Activated CD4-positive, alpha-beta memory T cell treated with anti-CD3 and anti-CD28 coated beads, Interleukin-2, amount 10 ng/mL, durations not matched to agents 7 days and 5 days (primary cell): ENCODE measurements at regions of chrX and their contacts with region 1.

Region 1: GRCh38 chrX:136780763-136781162 is at the start of gene ARHGEF6:
- DNase-seq: peak; percentile 60
- H3K4me3 Mint-ChIP-seq: peak within 1 kb of the TSS; percentile 82
- H3K27ac Mint-ChIP-seq: peak within 1 kb of the TSS; percentile 95
- H3K4me1 Mint-ChIP-seq: peaks cover 55% of the 10 kb centered on the region
- H3K27me3 Mint-ChIP-seq: no peaks in the 10 kb centered on the region
- total RNA-seq, gene ARHGEF6: 119 to 121 TPM

Region 2: GRCh38 chrX:136747003-136747986 is 33.5 kb before region 1 on chrX:
- CTCF ChIA-PET with region 1: no interaction called
- POLR2A ChIA-PET with region 1: interaction called, 14 read pairs
- DNase-seq: peak; percentile 26
- H3K4me3 Mint-ChIP-seq: no peak overlapping the region
- H3K27ac Mint-ChIP-seq: peak overlapping the region; percentile 70
- H3K4me1 Mint-ChIP-seq: peaks cover 86% of the 10 kb centered on the region
- H3K27me3 Mint-ChIP-seq: no peaks in the 10 kb centered on the region

Region 3: GRCh38 chrX:136767104-136767941 is 13.4 kb before region 1 on chrX:
- CTCF ChIA-PET with region 1: interaction called, 3 read pairs
- POLR2A ChIA-PET with region 1: interaction called, 78 read pairs
- DNase-seq: peak; percentile 62
- H3K4me3 Mint-ChIP-seq: peak overlapping the region; percentile 72
- H3K27ac Mint-ChIP-seq: peak overlapping the region; percentile 88
- H3K4me1 Mint-ChIP-seq: peaks cover 66% of the 10 kb centered on the region
- H3K27me3 Mint-ChIP-seq: no peaks in the 10 kb centered on the region

Region 4: DNA sequence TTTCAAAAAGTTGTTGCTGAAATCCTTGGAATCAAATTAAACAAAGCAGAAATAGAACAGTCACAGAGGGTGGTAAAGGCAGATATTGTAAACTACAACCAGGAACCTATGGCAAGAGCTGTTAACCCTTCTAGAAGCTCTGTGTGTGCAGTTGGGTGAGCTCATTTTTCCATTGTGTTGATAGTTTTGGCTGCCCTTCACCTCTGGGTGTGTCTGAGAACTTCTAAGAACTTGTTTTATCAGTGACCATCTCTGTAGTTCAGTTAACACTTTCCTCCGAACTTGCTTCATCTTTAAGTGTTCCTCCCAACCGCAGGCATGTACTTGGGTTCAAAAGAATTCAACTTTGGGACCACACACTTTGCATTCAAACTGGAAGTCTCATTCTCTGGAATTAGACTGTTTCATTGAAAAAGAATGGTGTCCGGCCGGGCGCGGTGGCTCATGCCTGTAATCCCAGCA is 67.1 kb after region 1 on chrX:
- CTCF ChIA-PET with region 1: no interaction called
- POLR2A ChIA-PET with region 1: interaction called, 10 read pairs
- DNase-seq: no peak
- H3K4me3 Mint-ChIP-seq: peak overlapping the region; percentile 36
- H3K27ac Mint-ChIP-seq: peak overlapping the region; percentile 77
- H3K4me1 Mint-ChIP-seq: peaks cover 13% of the 10 kb centered on the region
- H3K27me3 Mint-ChIP-seq: no peaks in the 10 kb centered on the region

Region 5: GRCh38 chrX:136909706-136910564 is 129.2 kb after region 1 on chrX:
- CTCF ChIA-PET with region 1: interaction called, 3 read pairs
- POLR2A ChIA-PET with region 1: interaction called, 13 read pairs
- DNase-seq: peak; percentile 73
- H3K4me3 Mint-ChIP-seq: peak overlapping the region; percentile 90
- H3K27ac Mint-ChIP-seq: peak overlapping the region; percentile 61
- H3K4me1 Mint-ChIP-seq: peaks cover 21% of the 10 kb centered on the region
- H3K27me3 Mint-ChIP-seq: no peaks in the 10 kb centered on the region